Esophagus muscularis mucosa (tissue), 4 donors: ENCODE measurements at regions of chr4 and their contacts with region 1.

Region 1: DNA sequence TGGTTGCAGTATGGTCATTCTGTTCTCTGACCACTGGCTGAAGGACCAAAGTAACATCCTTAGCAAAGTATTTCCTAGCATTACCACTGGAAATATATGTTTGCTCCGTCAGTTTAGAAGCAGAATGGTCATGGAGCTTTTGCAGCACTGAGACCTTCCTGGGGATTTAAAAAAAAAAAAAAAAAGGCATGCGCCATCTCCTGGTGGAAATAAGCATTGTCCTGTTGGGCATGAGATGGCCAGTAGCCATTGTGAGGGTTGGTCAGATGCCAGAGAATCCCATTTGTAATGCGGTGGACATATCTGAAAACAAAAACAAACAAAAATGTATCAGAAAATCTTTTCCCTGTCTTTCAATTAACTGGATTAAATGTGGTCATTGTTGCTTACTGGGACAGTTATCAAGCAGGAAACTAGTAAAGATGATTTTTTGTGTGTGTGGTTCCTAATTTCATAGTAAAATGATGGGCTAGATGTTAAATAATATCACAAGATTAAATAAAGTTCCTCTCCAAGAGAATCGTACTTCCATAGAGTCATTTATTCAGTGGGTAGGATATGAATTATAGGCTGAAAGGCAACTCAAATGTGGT is 139.6 kb downstream of the SOWAHB start:
- DNase-seq: no peak
- H3K4me3 ChIP-seq: no peak overlapping the region
- H3K27ac ChIP-seq: peak overlapping the region in 1 of 4 donors; percentile 4
- H3K4me1 ChIP-seq: peaks cover 8 to 44% (median 28%) of the 10 kb centered on the region in 4 donors
- H3K27me3 ChIP-seq: no peaks in the 10 kb centered on the region
- CTCF ChIP-seq: peak; percentile 75 to 79 (median 77)
- EP300 ChIP-seq: no peak
- POLR2A ChIP-seq: no peak

Region 2: DNA sequence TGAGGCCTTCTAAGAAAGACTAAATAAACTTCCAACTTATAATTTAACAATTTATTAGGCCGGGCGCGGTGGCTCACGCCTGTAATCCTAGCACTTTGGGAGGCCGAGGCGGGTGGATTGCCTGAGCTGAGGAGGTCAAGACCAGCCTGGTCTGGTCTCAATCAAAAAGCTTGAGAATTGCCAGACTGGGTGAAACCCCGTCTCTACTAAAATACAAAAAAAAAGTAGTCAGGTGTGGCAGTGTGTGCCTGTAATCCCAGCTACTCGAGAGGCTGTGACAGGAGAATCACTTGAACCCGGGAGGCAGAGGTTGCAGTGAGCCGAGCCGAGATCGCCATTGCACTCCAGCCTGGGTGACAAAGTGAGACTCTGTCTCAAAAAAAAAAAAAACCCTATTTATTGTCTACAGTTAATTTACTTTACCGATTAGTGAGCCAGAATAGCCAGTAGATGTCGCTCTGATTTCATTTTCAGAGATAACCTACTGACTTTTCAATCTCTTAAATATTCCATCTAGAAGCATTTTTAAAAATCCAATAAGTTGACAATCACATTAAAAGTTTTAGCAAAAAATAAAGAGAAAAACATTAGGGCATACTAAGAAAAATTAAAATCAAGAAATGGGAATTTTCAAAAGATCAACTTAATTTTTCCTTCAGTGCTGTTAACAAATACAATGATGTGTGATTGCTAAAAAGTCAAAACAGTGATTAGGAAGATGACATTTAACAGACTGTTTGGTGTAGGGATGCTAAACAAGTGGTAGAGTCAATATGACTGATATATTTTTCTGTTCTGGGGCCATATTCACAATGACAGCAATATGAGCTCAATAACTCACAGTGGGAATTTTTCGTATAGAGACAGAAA is 327.6 kb before region 1 on chr4:
- intact Hi-C with region 1: loop called (anchors 10 kb)
- DNase-seq: no peak
- H3K4me3 ChIP-seq: no peak overlapping the region
- H3K27ac ChIP-seq: no peak overlapping the region
- H3K4me1 ChIP-seq: peaks cover 0 to 29% (median 20%) of the 10 kb centered on the region in 4 donors
- H3K27me3 ChIP-seq: no peaks in the 10 kb centered on the region
- CTCF ChIP-seq: peak; percentile 71 to 74 (median 73)
- EP300 ChIP-seq: no peak
- POLR2A ChIP-seq: no peak

Region 3: GRCh38 chr4:76515975-76516843 is 242.2 kb before region 1 on chr4:
- intact Hi-C with region 1: loop called (anchors 2 kb)
- DNase-seq: no peak
- H3K4me3 ChIP-seq: no peak overlapping the region
- H3K27ac ChIP-seq: no peak overlapping the region
- H3K4me1 ChIP-seq: peaks cover 0 to 23% (median 14%) of the 10 kb centered on the region in 4 donors
- H3K27me3 ChIP-seq: no peaks in the 10 kb centered on the region
- CTCF ChIP-seq: no peak
- EP300 ChIP-seq: no peak
- POLR2A ChIP-seq: no peak

Region 4: GRCh38 chr4:76624241-76624681 is 134.1 kb before region 1 on chr4:
- intact Hi-C with region 1: loop called (anchors 10 kb)
- DNase-seq: no peak
- H3K4me3 ChIP-seq: peak overlapping the region in 3 of 4 donors; percentile 20 to 33 (median 23)
- H3K27ac ChIP-seq: peak overlapping the region; percentile 74 to 84 (median 82)
- H3K4me1 ChIP-seq: peaks cover 15 to 73% (median 55%) of the 10 kb centered on the region in 4 donors
- H3K27me3 ChIP-seq: no peaks in the 10 kb centered on the region
- CTCF ChIP-seq: peak in 1 of 3 experiments; percentile 6
- EP300 ChIP-seq: peak; percentile 66
- POLR2A ChIP-seq: no peak